K562 (cell line): ENCODE measurements at regions of chr21 and their contacts with region 1.

Region 1: GRCh38 chr21:34888569-34889319 is 160.4 kb downstream of the RUNX1 start:
- DNase-seq: peak; percentile 90 to 98 (median 95)
- ATAC-seq: peak; percentile 75
- H3K4me3 ChIP-seq: peak overlapping the region; percentile 68
- H3K27ac ChIP-seq: peak overlapping the region; percentile 94
- H3K4me1 ChIP-seq: peaks cover 16 to 40% of the 10 kb centered on the region in 2 experiments
- H3K27me3 ChIP-seq: no peaks in the 10 kb centered on the region
- CTCF ChIP-seq: no peak; a peak in 1 of 6 replicates
- EP300 ChIP-seq: 0 out of 2 replicates have a peak, but pooled peaks have one; percentile 12
- POLR2A ChIP-seq: peak; percentile 96
- RAD21 ChIP-seq: no peak

Region 2: GRCh38 chr21:34745557-34746255 is 143.0 kb before region 1 on chr21:
- CTCF ChIA-PET with region 1: no interaction called
- POLR2A ChIA-PET with region 1: interaction called, 5 read pairs
- in situ Hi-C with region 1: no loop called
- intact Hi-C with region 1: loop called (anchors 5 kb)
- DNase-seq: peak; percentile 78 to 89 (median 86)
- ATAC-seq: peak; percentile 99
- H3K4me3 ChIP-seq: no peak overlapping the region
- H3K27ac ChIP-seq: no peak overlapping the region
- H3K4me1 ChIP-seq: peaks cover 4 to 6% of the 10 kb centered on the region in 2 experiments; a peak in 3 of 5 replicates
- H3K27me3 ChIP-seq: peaks cover 9 to 36% of the 10 kb centered on the region in 2 experiments
- CTCF ChIP-seq: peak; percentile 98 to 99 (median 98)
- EP300 ChIP-seq: peak; percentile 46
- POLR2A ChIP-seq: no peak
- RAD21 ChIP-seq: peak; percentile 99

Region 3: GRCh38 chr21:34817821-34818661 is 70.7 kb before region 1 on chr21:
- CTCF ChIA-PET with region 1: no interaction called
- POLR2A ChIA-PET with region 1: no interaction called
- in situ Hi-C with region 1: no loop called
- intact Hi-C with region 1: no loop called
- DNase-seq: no peak
- ATAC-seq: no peak
- H3K4me3 ChIP-seq: no peak overlapping the region
- H3K27ac ChIP-seq: no peak overlapping the region
- H3K4me1 ChIP-seq: peaks cover 0 to 3% of the 10 kb centered on the region in 2 experiments; a peak in 1 of 5 replicates
- H3K27me3 ChIP-seq: no peaks in the 10 kb centered on the region
- CTCF ChIP-seq: no peak
- EP300 ChIP-seq: no peak
- POLR2A ChIP-seq: no peak
- RAD21 ChIP-seq: no peak

Region 4: GRCh38 chr21:34900376-34900775 is 11.6 kb after region 1 on chr21:
- CTCF ChIA-PET with region 1: no interaction called
- POLR2A ChIA-PET with region 1: interaction called, 54 read pairs
- in situ Hi-C with region 1: no loop called
- intact Hi-C with region 1: no loop called
- DNase-seq: no peak
- ATAC-seq: no peak
- H3K4me3 ChIP-seq: no peak overlapping the region
- H3K27ac ChIP-seq: no peak overlapping the region
- H3K4me1 ChIP-seq: peaks cover 6 to 23% of the 10 kb centered on the region in 2 experiments; a peak in 4 of 5 replicates
- H3K27me3 ChIP-seq: no peaks in the 10 kb centered on the region
- CTCF ChIP-seq: no peak
- EP300 ChIP-seq: no peak
- POLR2A ChIP-seq: no peak
- RAD21 ChIP-seq: no peak

Region 5: DNA sequence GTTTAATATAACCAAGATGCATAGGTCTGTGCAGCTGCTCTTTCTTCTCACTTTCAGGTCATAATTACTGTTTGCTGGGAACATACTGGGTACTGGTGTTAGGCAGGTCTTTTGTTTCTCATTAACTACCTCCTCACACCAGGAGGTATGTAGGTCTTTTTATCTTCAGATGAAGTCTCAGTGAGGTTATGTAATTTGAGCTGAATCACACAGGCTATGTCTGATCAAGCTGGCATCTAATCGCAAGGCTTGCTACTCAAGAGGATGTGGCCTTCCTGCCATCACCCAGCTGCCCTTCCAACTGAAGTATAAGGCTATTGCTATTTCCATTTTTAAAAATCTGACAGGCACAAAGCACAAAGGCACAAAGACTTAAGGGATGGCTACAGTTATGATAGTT is 64.0 kb after region 1 on chr21:
- CTCF ChIA-PET with region 1: no interaction called
- POLR2A ChIA-PET with region 1: interaction called, 6 read pairs
- in situ Hi-C with region 1: no loop called
- intact Hi-C with region 1: loop called (anchors 5 kb)
- DNase-seq: no peak
- ATAC-seq: no peak
- H3K4me3 ChIP-seq: no peak overlapping the region
- H3K27ac ChIP-seq: no peak overlapping the region
- H3K4me1 ChIP-seq: peaks cover 12 to 33% of the 10 kb centered on the region in 2 experiments
- H3K27me3 ChIP-seq: no peaks in the 10 kb centered on the region
- CTCF ChIP-seq: no peak
- EP300 ChIP-seq: no peak
- POLR2A ChIP-seq: no peak
- RAD21 ChIP-seq: no peak

Region 6: DNA sequence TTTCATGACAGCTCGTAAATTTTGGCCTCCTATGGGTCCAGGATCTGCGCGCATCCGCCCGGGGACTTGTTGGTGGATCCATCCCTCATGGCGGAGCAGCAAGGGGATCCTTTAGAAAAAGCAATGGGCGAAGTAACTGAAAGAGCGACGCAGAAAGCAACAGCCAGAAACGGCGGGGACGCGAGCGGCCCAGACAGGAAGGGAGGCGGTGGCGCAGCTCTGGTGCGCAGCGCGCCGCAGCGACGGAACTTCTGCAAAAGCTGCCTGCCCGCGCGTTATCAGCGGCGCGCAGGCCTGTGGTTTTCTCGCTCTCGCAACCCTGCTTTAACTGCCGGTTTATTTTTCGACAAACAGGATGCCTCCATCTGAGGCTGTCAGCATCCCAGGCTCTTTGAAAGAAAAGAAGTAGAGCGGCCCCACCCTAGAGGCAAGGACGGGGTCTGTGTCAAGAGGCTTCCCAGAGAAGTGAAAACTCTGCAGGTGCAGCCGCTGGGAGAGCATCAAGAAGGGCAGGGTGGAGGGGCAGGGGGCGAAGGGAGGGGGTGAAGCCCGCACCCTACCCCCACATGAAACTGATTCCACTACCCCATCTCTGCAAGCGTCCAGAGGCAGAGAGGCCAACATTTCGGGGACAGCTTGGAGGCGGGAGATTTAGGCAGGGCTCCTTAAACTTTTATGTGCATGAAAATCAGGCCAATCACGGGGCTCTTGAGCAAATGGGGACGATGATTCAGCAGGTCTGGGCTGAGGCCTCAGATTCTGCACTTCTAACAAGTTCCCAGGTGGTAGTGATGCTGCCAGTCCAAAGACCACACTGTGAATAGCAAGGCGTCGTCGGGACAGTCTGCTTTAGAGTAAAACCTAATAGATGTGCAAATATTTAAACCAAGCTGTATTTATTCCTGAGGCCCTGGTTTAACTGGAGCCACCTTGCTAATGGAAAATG is 138.1 kb after region 1 on chr21:
- CTCF ChIA-PET with region 1: no interaction called
- POLR2A ChIA-PET with region 1: interaction called, 9 read pairs
- in situ Hi-C with region 1: loop called (anchors 5 kb)
- intact Hi-C with region 1: loop called (anchors 1 kb)
- DNase-seq: peak; percentile 84 to 99 (median 86)
- ATAC-seq: peak; percentile 96
- H3K4me3 ChIP-seq: peak overlapping the region; percentile 28
- H3K27ac ChIP-seq: peak overlapping the region; percentile 95
- H3K4me1 ChIP-seq: peaks cover 31 to 47% of the 10 kb centered on the region in 2 experiments
- H3K27me3 ChIP-seq: no peaks in the 10 kb centered on the region
- CTCF ChIP-seq: peak in 2 of 3 experiments; percentile 18 to 30; a peak in 4 of 6 replicates
- EP300 ChIP-seq: peak; percentile 100
- POLR2A ChIP-seq: peak; percentile 79
- RAD21 ChIP-seq: peak; percentile 45 to 57

Region 7: DNA sequence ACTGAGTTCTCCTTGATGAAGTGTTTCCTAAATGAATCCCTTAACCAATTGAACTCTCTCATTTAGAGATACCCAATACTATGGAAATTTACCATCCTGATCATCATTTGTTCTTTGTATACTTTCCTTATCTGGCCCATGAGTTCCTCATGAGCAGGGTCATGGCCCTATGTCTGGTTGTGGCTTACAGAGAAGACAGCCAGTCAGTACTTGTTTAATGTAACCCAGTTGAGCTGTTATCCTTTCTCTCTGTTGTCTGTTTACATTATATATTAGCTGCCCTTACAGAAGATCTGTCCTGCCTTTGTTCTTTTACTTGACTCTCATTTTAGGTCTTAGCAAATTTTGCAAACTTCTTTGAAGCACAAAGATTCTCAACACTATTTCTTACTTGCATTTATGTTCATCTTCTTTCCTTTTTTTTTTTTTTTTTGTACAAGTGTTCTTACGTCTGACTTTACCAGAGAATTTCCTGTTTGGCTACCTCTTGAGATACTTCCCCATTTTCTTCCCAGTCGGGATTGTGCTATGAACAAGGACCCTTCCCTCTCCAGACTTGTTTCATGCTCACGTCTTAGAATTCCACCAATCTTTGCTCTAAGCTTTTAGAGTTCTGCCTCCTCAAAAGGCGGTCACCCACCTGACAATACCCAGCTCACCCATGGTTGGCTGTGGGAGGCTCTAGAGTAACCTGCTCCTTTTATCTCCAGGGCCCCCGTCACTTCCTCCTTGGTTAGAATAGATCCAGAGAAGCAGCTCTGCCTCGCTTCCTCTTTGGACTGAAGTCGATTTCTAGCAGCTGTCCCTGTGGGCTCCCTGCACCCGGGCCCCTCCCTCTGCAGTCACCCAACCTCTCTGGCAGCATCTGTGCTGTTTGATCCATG is 214.0 kb after region 1 on chr21:
- CTCF ChIA-PET with region 1: no interaction called
- POLR2A ChIA-PET with region 1: interaction called, 5 read pairs
- in situ Hi-C with region 1: no loop called
- intact Hi-C with region 1: loop called (anchors 5 kb)
- DNase-seq: peak; percentile 39 to 82 (median 58)
- ATAC-seq: peak; percentile 50
- H3K4me3 ChIP-seq: no peak overlapping the region
- H3K27ac ChIP-seq: peak overlapping the region; percentile 70
- H3K4me1 ChIP-seq: peaks cover 37 to 77% of the 10 kb centered on the region in 2 experiments
- H3K27me3 ChIP-seq: no peaks in the 10 kb centered on the region
- CTCF ChIP-seq: no peak
- EP300 ChIP-seq: peak; percentile 5; the same call in 1 of the 2 replicates
- POLR2A ChIP-seq: no peak
- RAD21 ChIP-seq: no peak; a peak in 1 of 4 replicates

Region 8: DNA sequence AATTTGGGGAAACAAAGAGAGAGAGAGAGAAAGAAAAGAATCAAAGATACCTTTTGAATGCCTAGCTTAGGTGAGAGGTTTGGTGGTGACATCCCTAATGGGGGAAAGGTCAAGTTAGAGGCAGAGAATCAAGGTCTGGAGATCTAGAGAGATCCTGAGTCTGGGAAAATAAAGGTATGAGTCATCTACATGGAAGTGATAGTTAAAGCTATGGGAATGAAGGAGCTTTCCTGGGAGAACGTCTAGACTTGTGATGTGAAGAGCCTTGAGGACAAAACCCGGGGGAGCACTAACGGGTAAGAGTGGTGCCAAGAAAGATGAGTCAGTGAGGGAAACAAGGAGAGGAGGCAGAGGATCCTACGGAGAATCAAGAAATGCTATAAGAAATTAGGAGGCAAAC is 271.1 kb after region 1 on chr21:
- CTCF ChIA-PET with region 1: no interaction called
- POLR2A ChIA-PET with region 1: no interaction called
- in situ Hi-C with region 1: no loop called
- intact Hi-C with region 1: no loop called
- DNase-seq: no peak
- ATAC-seq: no peak
- H3K4me3 ChIP-seq: no peak overlapping the region
- H3K27ac ChIP-seq: no peak overlapping the region
- H3K4me1 ChIP-seq: peaks cover 0 to 5% of the 10 kb centered on the region in 2 experiments; a peak in 2 of 5 replicates
- H3K27me3 ChIP-seq: no peaks in the 10 kb centered on the region
- CTCF ChIP-seq: no peak
- EP300 ChIP-seq: no peak
- POLR2A ChIP-seq: no peak
- RAD21 ChIP-seq: no peak

Region 9: DNA sequence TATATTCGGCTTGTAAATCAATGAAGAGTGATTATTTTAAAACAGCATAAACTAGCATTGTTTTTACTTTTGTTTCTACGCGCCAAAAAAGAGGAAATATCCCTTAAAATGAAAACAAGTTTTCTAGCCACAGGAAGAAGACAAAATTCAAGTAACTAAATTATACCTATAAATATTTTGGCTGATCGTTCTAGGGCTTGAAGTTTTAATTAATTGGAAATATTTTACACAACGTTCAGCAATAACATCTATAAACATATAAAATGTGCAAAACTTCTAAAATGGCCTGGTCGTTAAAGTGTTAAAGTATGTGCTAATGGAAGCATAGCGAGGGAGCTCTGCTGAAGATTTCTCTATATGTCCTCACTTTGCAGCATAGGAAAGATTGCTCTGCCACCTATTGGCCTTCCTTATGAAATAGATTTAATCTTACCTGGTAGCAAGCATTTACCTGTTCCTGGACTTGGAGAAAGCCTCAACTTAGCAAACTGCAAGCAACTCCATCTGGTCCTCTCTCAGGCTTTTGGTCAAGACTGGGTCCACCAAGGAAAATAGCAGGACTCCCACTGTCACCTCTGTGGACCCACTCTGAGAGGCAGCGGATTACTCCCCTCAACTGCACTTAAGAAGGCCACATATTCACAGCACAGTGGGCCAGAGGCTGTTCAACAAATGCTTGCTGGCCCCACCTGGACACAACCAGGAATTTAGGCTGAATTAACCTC is 511.7 kb after region 1 on chr21:
- CTCF ChIA-PET with region 1: interaction called, 19 read pairs
- POLR2A ChIA-PET with region 1: no interaction called
- in situ Hi-C with region 1: no loop called
- intact Hi-C with region 1: loop called (anchors 2 kb)
- DNase-seq: peak; percentile 18 to 79 (median 38)
- ATAC-seq: peak; percentile 92
- H3K4me3 ChIP-seq: no peak overlapping the region
- H3K27ac ChIP-seq: no peak overlapping the region
- H3K4me1 ChIP-seq: peaks cover 0 to 15% of the 10 kb centered on the region in 2 experiments; a peak in 3 of 5 replicates
- H3K27me3 ChIP-seq: no peaks in the 10 kb centered on the region; a peak in 2 of 5 replicates
- CTCF ChIP-seq: peak; percentile 53 to 82 (median 70)
- EP300 ChIP-seq: peak; percentile 48; the same call in 1 of the 2 replicates
- POLR2A ChIP-seq: no peak
- RAD21 ChIP-seq: peak; percentile 97 to 98

Region 10: DNA sequence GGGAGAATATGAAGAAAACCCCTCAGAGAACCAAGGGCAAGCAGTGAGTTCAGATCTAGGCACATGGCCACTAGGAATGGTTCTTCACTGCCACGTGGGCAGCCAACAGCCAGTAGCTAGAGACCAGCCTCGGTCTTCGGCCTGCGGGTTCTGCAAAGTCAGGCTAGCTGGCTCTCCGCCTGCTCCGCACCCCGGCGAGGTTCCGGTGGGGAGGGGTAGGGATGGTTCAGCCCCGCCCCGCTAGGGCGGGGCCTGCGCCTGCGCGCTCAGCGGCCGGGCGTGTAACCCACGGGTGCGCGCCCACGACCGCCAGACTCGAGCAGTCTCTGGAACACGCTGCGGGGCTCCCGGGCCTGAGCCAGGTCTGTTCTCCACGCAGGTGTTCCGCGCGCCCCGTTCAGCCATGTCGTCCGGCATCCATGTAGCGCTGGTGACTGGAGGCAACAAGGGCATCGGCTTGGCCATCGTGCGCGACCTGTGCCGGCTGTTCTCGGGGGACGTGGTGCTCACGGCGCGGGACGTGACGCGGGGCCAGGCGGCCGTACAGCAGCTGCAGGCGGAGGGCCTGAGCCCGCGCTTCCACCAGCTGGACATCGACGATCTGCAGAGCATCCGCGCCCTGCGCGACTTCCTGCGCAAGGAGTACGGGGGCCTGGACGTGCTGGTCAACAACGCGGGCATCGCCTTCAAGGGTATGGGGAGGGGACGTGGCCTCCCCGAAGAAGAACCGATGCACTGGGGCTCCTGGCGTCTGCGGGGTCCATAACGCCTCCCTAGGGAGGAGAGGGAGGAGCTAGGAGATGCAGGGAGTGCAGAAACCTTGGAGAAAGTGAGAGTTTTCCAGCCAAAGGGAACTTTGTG is 1181.2 kb after region 1 on chr21 and contains the start of gene CBR1:
- CTCF ChIA-PET with region 1: no interaction called
- POLR2A ChIA-PET with region 1: no interaction called
- in situ Hi-C with region 1: no loop called
- intact Hi-C with region 1: no loop called
- DNase-seq: peak; percentile 78 to 87 (median 80)
- ATAC-seq: peak; percentile 93
- H3K4me3 ChIP-seq: peak within 1 kb of the TSS; percentile 43
- H3K27ac ChIP-seq: peak within 1 kb of the TSS; percentile 29
- H3K4me1 ChIP-seq: peaks cover 0 to 9% of the 10 kb centered on the region in 2 experiments; a peak in 1 of 5 replicates
- H3K27me3 ChIP-seq: no peaks in the 10 kb centered on the region
- CTCF ChIP-seq: no peak
- EP300 ChIP-seq: no peak
- POLR2A ChIP-seq: peak; percentile 69
- RAD21 ChIP-seq: no peak
- polyA plus RNA-seq, gene CBR1: 2.5 to 5.5 TPM